A549 (cell line): ENCODE measurements at regions of chr3 and their contacts with region 1.

Region 1: DNA sequence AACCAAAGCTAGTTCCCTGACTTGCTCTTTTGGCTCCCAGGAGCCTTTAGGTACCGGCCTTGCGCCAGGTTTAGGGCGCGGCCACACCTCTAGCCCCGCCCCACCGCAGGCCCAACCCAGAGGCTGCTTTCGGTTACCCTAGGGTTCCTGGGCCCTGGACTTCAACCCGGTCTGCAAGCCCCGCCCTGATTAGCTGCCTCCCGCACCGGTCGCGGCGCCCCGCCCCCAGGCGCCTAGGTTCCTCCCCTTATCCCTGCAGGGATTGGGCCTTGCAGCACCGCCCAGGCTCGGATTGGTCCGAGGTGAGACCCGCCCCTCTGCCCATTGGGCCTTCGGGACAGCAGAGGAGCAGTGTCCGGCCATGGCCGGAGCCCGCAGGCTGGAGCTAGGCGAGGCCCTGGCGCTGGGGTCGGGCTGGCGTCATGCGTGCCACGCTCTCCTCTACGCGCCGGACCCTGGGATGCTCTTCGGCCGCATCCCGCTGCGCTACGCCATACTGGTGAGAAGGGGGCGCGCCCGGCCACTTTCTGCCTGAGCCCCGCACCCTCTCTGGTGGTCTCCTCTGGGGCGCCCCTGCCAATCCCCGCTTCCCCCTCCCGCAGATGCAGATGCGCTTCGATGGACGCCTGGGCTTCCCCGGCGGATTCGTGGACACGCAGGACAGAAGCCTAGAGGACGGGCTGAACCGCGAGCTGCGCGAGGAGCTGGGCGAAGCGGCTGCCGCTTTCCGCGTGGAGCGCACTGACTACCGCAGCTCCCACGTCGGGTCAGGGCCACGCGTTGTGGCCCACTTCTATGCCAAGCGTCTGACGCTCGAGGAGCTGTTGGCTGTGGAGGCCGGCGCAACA is at the start of gene NUDT16:
- DNase-seq: peak; percentile 87 to 97
- ATAC-seq: peak; percentile 99 to 100
- H3K4me3 ChIP-seq: peak within 1 kb of the TSS; percentile 70
- H3K27ac ChIP-seq: peak within 1 kb of the TSS; percentile 75 to 94
- H3K4me1 ChIP-seq: no peaks in the 10 kb centered on the region; the same call in 2 of the 3 replicates
- CTCF ChIP-seq: no peak
- EP300 ChIP-seq: no peak
- POLR2A ChIP-seq: peak; percentile 84
- RAD21 ChIP-seq: no peak; a peak in 1 of 5 replicates
- polyA plus RNA-seq, gene NUDT16: 5.6 and 8.2 TPM in 2 replicates

Region 2: GRCh38 chr3:131033480-131034080 is 348.1 kb before region 1 on chr3:
- CTCF ChIA-PET with region 1: no interaction called
- POLR2A ChIA-PET with region 1: no interaction called
- DNase-seq: peak; percentile 14 to 40
- ATAC-seq: peak in 1 of 2 experiments; percentile 67; a peak in 3 of 6 replicates
- H3K4me3 ChIP-seq: no peak overlapping the region
- H3K27ac ChIP-seq: no peak overlapping the region
- H3K4me1 ChIP-seq: peaks cover 12% of the 10 kb centered on the region
- CTCF ChIP-seq: peak; percentile 70
- EP300 ChIP-seq: no peak
- POLR2A ChIP-seq: no peak
- RAD21 ChIP-seq: peak; percentile 66 to 74

Region 3: GRCh38 chr3:131338948-131339640 is 42.6 kb before region 1 on chr3:
- CTCF ChIA-PET with region 1: no interaction called
- POLR2A ChIA-PET with region 1: no interaction called
- DNase-seq: no peak
- ATAC-seq: no peak
- H3K4me3 ChIP-seq: no peak overlapping the region
- H3K27ac ChIP-seq: no peak overlapping the region
- H3K4me1 ChIP-seq: 0 out of 3 replicates have a peak, but pooled peaks cover 3% of the 10 kb centered on the region
- CTCF ChIP-seq: no peak
- EP300 ChIP-seq: no peak
- POLR2A ChIP-seq: no peak
- RAD21 ChIP-seq: no peak

Region 4: DNA sequence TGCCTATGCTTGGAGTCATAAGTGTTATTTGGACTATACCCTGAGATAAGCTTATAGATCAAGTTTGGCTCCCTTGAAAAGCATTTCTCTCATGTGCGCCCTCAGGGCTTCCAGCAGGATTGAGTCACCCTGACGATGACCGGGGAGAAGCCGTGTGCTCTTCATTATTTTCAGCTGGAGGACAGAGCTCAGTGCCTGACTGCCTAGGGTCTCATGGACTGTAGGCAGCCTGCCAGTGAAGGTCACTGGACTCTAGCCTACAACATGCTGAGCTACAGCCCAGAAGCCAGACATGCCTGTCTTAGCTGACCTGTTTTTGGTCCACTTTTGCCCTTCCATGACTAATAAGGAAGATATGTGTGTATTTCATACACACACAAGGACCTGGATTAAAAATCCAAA is 31.7 kb before region 1 on chr3:
- CTCF ChIA-PET with region 1: no interaction called
- POLR2A ChIA-PET with region 1: interaction called, 10 read pairs
- DNase-seq: peak; percentile 7 to 42
- ATAC-seq: peak; percentile 86 to 89
- H3K4me3 ChIP-seq: no peak overlapping the region
- H3K27ac ChIP-seq: peak overlapping the region; percentile 47 to 87
- H3K4me1 ChIP-seq: peaks cover 50% of the 10 kb centered on the region
- CTCF ChIP-seq: no peak
- EP300 ChIP-seq: peak in 1 of 2 experiments; percentile 25; a peak in 1 of 5 replicates
- POLR2A ChIP-seq: no peak
- RAD21 ChIP-seq: no peak